Activated naive CD4-positive, alpha-beta T cell treated with anti-CD3 and anti-CD28 coated beads for 36 hours (primary cell): ENCODE measurements at regions of chr7 and their contacts with region 1.

Region 1: DNA sequence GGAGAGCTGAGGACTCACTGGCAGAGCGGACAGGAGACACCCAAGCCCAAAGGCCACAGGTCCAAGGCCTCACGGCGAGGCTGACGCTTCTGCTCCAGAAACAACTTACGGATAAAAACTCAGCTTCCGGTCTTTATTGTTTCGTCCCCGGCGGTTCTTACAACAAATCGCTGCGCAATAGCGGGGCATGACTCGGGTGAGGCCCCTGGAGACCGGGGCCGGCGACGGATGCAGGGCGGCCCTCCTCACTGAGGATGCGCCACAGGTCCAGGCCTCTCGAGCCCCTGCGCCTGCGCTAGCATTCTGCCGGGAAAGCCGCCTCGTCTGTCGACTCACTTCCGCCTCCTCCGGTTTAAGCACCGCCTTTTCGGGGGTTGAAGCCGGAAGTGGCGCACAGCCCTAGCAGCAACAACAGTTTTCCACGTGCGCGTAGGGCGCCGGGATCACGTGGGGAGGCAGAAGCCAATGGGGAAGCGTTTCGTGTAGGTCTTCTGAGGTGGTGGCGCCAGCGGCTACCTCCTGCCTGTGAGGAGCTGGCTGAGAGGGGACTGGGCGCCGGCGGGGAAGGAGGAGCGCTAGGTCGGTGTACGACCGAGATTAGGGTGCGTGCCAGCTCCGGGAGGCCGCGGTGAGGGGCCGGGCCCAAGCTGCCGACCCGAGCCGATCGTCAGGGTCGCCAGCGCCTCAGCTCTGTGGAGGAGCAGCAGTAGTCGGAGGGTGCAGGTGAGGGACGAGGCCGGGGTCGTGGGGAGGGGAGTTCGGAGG is at the starts of genes DNAJB9 and THAP5:
- DNase-seq: peak; percentile 99
- H3K4me3 Mint-ChIP-seq: peak within 1 kb of the TSS; percentile 98
- H3K27ac Mint-ChIP-seq: peak within 1 kb of the TSS; percentile 99
- H3K4me1 Mint-ChIP-seq: peaks cover 49% of the 10 kb centered on the region
- H3K27me3 Mint-ChIP-seq: no peaks in the 10 kb centered on the region
- total RNA-seq, gene DNAJB9: 8.2 TPM
- total RNA-seq, gene THAP5: 22.7 to 24.8 TPM

Region 2: DNA sequence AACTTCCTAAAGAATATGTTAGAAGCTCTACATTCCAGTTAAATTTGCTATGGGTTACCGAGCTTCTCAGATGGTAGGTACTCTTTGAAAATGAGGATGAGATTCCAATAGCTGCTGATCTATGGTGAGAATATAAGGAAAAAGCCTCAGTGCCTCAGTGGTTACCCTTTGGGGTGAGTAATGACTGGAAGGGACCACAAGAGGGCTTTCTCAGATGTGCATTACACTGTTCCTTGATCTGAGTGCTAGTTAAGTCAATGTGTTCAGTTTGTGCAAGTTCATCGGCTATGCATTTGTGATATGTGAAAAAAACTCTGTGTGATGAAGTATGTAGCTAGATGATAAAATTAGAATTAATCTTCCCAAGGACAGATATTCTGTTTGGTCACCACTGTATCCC is 116.8 kb before region 1 on chr7:
- CTCF ChIA-PET with region 1: no interaction called
- intact Hi-C with region 1: loop called (anchors 2 kb)
- DNase-seq: no peak
- H3K4me3 Mint-ChIP-seq: no peak overlapping the region
- H3K27ac Mint-ChIP-seq: no peak overlapping the region
- H3K4me1 Mint-ChIP-seq: peaks cover 12% of the 10 kb centered on the region
- H3K27me3 Mint-ChIP-seq: peaks cover 33% of the 10 kb centered on the region

Region 3: GRCh38 chr7:108525985-108526767 is 43.4 kb before region 1 on chr7 and contains the start of gene PNPLA8:
- CTCF ChIA-PET with region 1: no interaction called
- intact Hi-C with region 1: loop called (anchors 1 kb)
- DNase-seq: peak; percentile 100
- H3K4me3 Mint-ChIP-seq: peak within 1 kb of the TSS; percentile 92
- H3K27ac Mint-ChIP-seq: peak within 1 kb of the TSS; percentile 97
- H3K4me1 Mint-ChIP-seq: peaks cover 36% of the 10 kb centered on the region
- H3K27me3 Mint-ChIP-seq: no peaks in the 10 kb centered on the region
- total RNA-seq, gene PNPLA8: 18.8 to 18.9 TPM

Region 4: GRCh38 chr7:108541478-108541877 is 28.1 kb before region 1 on chr7:
- CTCF ChIA-PET with region 1: no interaction called
- intact Hi-C with region 1: loop called (anchors 2 kb)
- DNase-seq: no peak
- H3K4me3 Mint-ChIP-seq: no peak overlapping the region
- H3K27ac Mint-ChIP-seq: no peak overlapping the region
- H3K4me1 Mint-ChIP-seq: no peaks in the 10 kb centered on the region
- H3K27me3 Mint-ChIP-seq: peaks cover 3% of the 10 kb centered on the region

Region 5: DNA sequence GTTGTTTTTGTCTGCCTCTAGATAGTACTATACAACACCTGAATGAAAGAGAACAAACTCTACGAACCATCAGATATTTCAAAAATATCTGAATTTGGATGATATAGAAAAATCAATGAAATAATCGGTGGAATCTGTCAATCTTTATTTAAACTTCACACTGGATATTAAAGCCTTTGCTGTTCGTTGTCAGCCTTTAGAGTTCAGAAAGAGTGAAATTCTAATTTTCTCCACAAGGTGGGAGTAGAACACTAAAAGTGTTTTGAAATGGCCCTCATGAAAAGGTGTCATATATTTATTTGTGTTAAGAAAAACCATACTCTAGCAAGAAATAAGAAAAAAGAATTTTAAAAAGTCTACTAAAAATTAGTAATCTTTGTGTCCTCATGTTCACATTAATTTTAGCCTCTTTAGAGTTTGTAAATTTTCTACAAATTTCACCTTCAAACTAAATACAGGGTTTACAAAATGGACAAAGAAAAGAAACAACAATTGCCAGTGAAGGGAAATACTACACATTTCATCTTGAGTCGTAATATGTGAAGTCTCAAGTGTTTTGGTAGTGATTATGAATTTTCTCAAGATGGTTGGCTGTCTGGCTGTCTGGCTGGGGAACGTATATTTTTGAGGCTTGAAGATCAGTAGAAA is 43.7 kb after region 1 on chr7:
- CTCF ChIA-PET with region 1: no interaction called
- intact Hi-C with region 1: loop called (anchors 1 kb)
- DNase-seq: no peak
- H3K4me3 Mint-ChIP-seq: no peak overlapping the region
- H3K27ac Mint-ChIP-seq: no peak overlapping the region
- H3K4me1 Mint-ChIP-seq: no peaks in the 10 kb centered on the region
- H3K27me3 Mint-ChIP-seq: no peaks in the 10 kb centered on the region

Region 6: DNA sequence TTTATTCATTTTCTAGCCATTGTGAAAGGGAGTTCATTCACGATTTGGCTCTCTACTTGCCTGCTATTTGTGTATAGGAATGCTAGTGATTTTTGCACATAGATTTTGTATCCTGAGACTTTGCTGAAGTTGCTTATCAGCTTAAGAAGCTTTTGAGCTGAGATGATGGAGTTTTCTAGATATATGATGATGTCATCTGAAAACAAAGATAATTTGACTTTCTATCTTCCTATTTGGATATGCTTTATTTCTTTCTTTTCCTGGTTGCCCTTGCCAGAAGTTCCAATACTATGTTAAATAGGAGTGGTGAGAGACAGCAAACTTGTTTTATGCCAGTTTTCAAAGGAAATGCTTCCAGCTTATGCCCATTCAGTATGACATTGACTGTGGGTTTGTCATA is 357.2 kb after region 1 on chr7:
- CTCF ChIA-PET with region 1: no interaction called
- intact Hi-C with region 1: no loop called
- DNase-seq: no peak
- H3K4me3 Mint-ChIP-seq: no peak overlapping the region
- H3K27ac Mint-ChIP-seq: no peak overlapping the region
- H3K4me1 Mint-ChIP-seq: no peaks in the 10 kb centered on the region
- H3K27me3 Mint-ChIP-seq: peaks cover 1% of the 10 kb centered on the region